IMR-90 (cell line): ENCODE measurements at regions of chr7 and their contacts with region 1.

Region 1: GRCh38 chr7:92904292-92905131 is 68.1 kb upstream of the CDK6 start:
- DNase-seq: peak; percentile 97
- ATAC-seq: peak; percentile 99
- H3K4me3 ChIP-seq: no peak overlapping the region
- H3K27ac ChIP-seq: peak overlapping the region; percentile 10; the same call in 1 of the 2 replicates
- H3K4me1 ChIP-seq: peaks cover 6% of the 10 kb centered on the region
- H3K27me3 ChIP-seq: no peaks in the 10 kb centered on the region
- CTCF ChIP-seq: no peak
- POLR2A ChIP-seq: no peak
- RAD21 ChIP-seq: peak; percentile 5; the same call in 1 of the 2 replicates

Region 2: DNA sequence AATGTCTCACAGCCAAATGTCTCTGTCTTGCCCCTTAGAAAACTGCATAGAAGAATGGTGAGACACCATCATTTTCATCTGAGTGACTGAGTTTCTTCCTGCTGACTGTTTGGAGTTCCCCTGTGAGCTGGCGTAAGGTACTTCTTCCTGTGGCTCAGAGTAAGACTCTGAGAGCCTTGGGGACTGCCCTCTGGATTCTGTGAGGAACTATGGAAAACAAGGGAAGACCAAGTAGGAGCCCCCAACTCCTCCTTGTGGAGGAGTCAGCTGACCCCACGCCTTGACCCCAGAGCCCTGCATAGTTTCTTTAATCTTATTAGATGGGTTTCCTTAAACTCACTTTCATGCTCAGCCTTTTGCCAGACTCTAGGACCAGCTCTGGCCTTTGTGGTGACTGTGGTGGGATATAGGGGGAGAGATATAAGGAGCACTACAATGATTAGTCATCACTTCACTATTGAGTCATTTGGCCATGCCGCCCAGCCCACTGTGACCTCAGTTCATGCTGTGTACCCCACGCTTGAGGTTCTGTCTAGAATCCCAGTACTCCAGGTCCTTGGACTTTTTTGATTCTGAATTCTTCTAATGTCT is 262.5 kb before region 1 on chr7:
- CTCF ChIA-PET with region 1: no interaction called
- POLR2A ChIA-PET with region 1: no interaction called
- dilution Hi-C with region 1: no loop called
- in situ Hi-C with region 1: no loop called
- intact Hi-C with region 1: loop called (anchors 10 kb)
- DNase-seq: peak; percentile 86
- ATAC-seq: peak; percentile 53
- H3K4me3 ChIP-seq: no peak overlapping the region
- H3K27ac ChIP-seq: 0 out of 2 replicates have a peak overlapping the region, but pooled peaks have one; percentile 0
- H3K4me1 ChIP-seq: peaks cover 16% of the 10 kb centered on the region
- H3K27me3 ChIP-seq: no peaks in the 10 kb centered on the region
- CTCF ChIP-seq: no peak
- POLR2A ChIP-seq: no peak
- RAD21 ChIP-seq: no peak